K562 (cell line): ENCODE measurements at regions of chr6 and their contacts with region 1.

Region 1: GRCh38 chr6:85678602-85679444 is 36.1 kb upstream of the SYNCRIP start:
- DNase-seq: peak; percentile 90 to 99 (median 94)
- ATAC-seq: peak; percentile 80
- H3K4me3 ChIP-seq: peak overlapping the region; percentile 63
- H3K27ac ChIP-seq: peak overlapping the region; percentile 90
- H3K4me1 ChIP-seq: peaks cover 5 to 14% of the 10 kb centered on the region in 2 experiments; a peak in 3 of 5 replicates
- H3K27me3 ChIP-seq: no peaks in the 10 kb centered on the region
- CTCF ChIP-seq: no peak
- EP300 ChIP-seq: no peak
- POLR2A ChIP-seq: peak; percentile 100
- RAD21 ChIP-seq: 0 out of 4 replicates have a peak, but pooled peaks of 1 of the 2 experiments have one; percentile 19

Region 2: DNA sequence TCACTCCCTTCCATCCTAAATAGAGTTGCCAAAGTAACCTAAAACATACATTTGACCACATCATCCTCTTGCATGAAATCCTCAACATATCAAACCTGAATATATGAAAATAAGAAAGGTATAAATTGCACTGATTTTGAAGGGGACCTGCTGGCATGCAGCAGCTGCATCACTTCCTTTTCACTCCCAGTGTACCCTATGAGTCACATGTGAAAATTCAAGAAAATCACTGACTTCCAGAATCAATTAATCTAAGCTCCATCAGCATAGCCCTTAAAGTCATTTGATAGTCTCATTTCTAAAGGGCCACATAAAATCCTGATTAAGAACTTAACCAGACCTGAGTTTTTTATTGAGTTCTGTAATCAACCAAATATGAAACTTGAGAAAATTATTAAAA is 109.5 kb before region 1 on chr6:
- CTCF ChIA-PET with region 1: no interaction called
- POLR2A ChIA-PET with region 1: no interaction called
- in situ Hi-C with region 1: no loop called
- intact Hi-C with region 1: no loop called
- DNase-seq: no peak
- ATAC-seq: no peak
- H3K4me3 ChIP-seq: no peak overlapping the region
- H3K27ac ChIP-seq: no peak overlapping the region
- H3K4me1 ChIP-seq: no peaks in the 10 kb centered on the region
- H3K27me3 ChIP-seq: no peaks in the 10 kb centered on the region
- CTCF ChIP-seq: no peak
- EP300 ChIP-seq: no peak
- POLR2A ChIP-seq: no peak
- RAD21 ChIP-seq: no peak

Region 3: GRCh38 chr6:85610182-85610895 is 68.5 kb before region 1 on chr6:
- CTCF ChIA-PET with region 1: no interaction called
- POLR2A ChIA-PET with region 1: interaction called, 19 read pairs
- in situ Hi-C with region 1: no loop called
- intact Hi-C with region 1: no loop called
- DNase-seq: no peak
- ATAC-seq: no peak
- H3K4me3 ChIP-seq: no peak overlapping the region
- H3K27ac ChIP-seq: no peak overlapping the region
- H3K4me1 ChIP-seq: no peaks in the 10 kb centered on the region
- H3K27me3 ChIP-seq: no peaks in the 10 kb centered on the region
- CTCF ChIP-seq: no peak
- EP300 ChIP-seq: no peak
- POLR2A ChIP-seq: 0 out of 2 replicates have a peak, but pooled peaks have one; percentile 14
- RAD21 ChIP-seq: no peak

Region 4: DNA sequence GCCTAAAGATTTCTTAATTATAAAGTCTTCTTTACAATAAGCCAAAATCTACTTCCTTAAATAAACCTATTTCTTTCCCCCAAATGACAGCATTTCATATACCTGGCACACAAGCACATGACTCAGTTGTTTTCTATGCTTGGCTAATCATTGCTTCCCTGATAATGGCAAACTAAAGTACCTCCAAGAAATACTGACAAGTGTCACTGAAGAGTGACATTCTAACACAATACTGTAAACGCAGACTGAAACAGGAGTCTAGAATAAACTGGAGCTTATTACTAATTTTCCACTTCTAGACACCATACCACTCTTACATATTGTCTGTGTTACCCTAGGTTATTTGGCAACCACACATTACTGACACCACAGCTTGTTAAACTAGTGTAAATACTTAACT is 50.5 kb before region 1 on chr6:
- CTCF ChIA-PET with region 1: interaction called, 3 read pairs
- POLR2A ChIA-PET with region 1: interaction called, 11 read pairs
- in situ Hi-C with region 1: no loop called
- intact Hi-C with region 1: no loop called
- DNase-seq: no peak
- ATAC-seq: no peak; the same call in 2 of the 3 replicates
- H3K4me3 ChIP-seq: no peak overlapping the region
- H3K27ac ChIP-seq: no peak overlapping the region
- H3K4me1 ChIP-seq: no peaks in the 10 kb centered on the region
- H3K27me3 ChIP-seq: no peaks in the 10 kb centered on the region
- CTCF ChIP-seq: no peak
- EP300 ChIP-seq: no peak
- POLR2A ChIP-seq: no peak
- RAD21 ChIP-seq: no peak

Region 5: GRCh38 chr6:85650606-85651005 is 28.2 kb before region 1 on chr6:
- CTCF ChIA-PET with region 1: interaction called, 7 read pairs
- POLR2A ChIA-PET with region 1: interaction called, 188 read pairs
- in situ Hi-C with region 1: no loop called
- intact Hi-C with region 1: no loop called
- DNase-seq: no peak
- ATAC-seq: peak; percentile 53
- H3K4me3 ChIP-seq: no peak overlapping the region
- H3K27ac ChIP-seq: no peak overlapping the region
- H3K4me1 ChIP-seq: no peaks in the 10 kb centered on the region
- H3K27me3 ChIP-seq: no peaks in the 10 kb centered on the region; a peak in 1 of 5 replicates
- CTCF ChIP-seq: no peak
- EP300 ChIP-seq: no peak
- POLR2A ChIP-seq: no peak
- RAD21 ChIP-seq: no peak

Region 6: DNA sequence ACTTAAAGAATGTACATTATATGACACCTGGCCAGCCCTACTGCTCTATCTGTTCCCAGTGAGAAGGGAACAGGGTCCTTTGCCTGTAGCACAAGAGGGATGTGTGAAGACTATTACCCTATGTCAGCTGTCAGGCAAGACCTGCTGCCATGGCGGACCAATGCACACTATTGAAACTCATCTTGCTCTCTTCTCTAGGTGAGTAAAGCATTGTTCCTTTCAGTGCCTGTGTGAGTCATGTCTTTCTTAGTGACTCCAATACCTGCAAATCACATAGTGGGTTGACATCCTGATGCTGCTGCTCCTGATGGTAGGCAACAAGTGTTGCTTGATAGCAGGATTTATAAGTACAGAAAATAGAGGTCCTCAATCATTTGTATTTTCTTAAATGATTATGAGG is 12.7 kb after region 1 on chr6:
- CTCF ChIA-PET with region 1: no interaction called
- POLR2A ChIA-PET with region 1: interaction called, 12 read pairs
- in situ Hi-C with region 1: no loop called
- intact Hi-C with region 1: no loop called
- DNase-seq: no peak
- ATAC-seq: no peak
- H3K4me3 ChIP-seq: no peak overlapping the region
- H3K27ac ChIP-seq: no peak overlapping the region
- H3K4me1 ChIP-seq: no peaks in the 10 kb centered on the region
- H3K27me3 ChIP-seq: peaks cover 3 to 9% of the 10 kb centered on the region in 2 experiments; a peak in 2 of 5 replicates
- CTCF ChIP-seq: no peak
- EP300 ChIP-seq: no peak
- POLR2A ChIP-seq: no peak
- RAD21 ChIP-seq: no peak

Region 7: DNA sequence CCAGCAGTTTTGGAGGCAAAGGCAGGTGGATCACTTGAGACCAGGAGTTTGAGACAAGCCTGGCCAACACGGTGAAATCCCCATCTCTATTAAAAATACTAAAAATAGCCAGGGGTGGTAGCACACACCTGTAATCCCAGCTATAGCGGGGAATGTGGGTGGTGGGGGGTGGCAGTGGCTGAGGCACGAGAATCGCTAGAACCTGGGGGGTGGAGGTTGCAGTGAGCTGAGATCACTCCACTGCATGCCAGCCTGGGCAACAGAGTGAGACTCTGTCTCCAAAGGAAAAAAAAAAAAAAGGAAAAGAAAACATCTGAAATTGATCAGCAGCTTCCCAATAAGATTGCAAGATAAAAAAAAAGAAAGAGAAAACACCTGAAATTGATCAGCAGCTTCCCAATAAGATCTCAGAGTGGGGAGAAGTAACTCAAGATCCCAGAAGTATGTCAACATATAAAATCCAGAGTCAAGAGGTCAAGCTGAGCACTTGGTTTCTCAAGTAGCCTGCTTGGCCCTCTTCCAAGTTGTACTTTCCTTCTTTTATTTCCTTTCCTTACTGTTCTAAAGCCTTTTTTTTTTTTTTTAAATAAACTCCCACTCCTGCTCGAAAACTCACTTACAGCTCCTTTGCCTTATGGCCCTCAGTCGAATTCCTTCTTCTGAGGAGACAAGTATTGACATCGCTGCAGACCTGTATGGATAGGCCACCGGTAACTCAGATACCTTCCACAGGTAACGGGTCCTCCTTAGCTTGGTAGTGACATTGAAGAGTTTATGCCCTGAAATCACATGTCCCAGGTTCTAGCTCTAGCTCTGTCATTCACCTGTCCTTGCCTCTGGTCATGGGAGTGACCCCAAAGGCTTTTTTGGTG is 332.3 kb after region 1 on chr6:
- CTCF ChIA-PET with region 1: no interaction called
- POLR2A ChIA-PET with region 1: no interaction called
- in situ Hi-C with region 1: no loop called
- intact Hi-C with region 1: no loop called
- DNase-seq: no peak
- ATAC-seq: no peak
- H3K4me3 ChIP-seq: no peak overlapping the region
- H3K27ac ChIP-seq: no peak overlapping the region
- H3K4me1 ChIP-seq: no peaks in the 10 kb centered on the region
- H3K27me3 ChIP-seq: no peaks in the 10 kb centered on the region
- CTCF ChIP-seq: no peak
- EP300 ChIP-seq: no peak
- POLR2A ChIP-seq: no peak
- RAD21 ChIP-seq: no peak